Activated CD4-positive, alpha-beta T cell treated with anti-CD3 and anti-CD28 coated beads, Interleukin-2, amount 10 ng/mL, durations not matched to agents 24 days and 14 days (primary cell): ENCODE measurements at regions of chr22 and their contacts with region 1.

Region 1: GRCh38 chr22:31846161-31847115 is 92.6 kb downstream of the DEPDC5 start:
- DNase-seq: peak; percentile 59
- H3K4me3 Mint-ChIP-seq: no peak overlapping the region
- H3K27ac Mint-ChIP-seq: no peak overlapping the region
- H3K4me1 Mint-ChIP-seq: peaks cover 7% of the 10 kb centered on the region
- H3K27me3 Mint-ChIP-seq: no peaks in the 10 kb centered on the region

Region 2: DNA sequence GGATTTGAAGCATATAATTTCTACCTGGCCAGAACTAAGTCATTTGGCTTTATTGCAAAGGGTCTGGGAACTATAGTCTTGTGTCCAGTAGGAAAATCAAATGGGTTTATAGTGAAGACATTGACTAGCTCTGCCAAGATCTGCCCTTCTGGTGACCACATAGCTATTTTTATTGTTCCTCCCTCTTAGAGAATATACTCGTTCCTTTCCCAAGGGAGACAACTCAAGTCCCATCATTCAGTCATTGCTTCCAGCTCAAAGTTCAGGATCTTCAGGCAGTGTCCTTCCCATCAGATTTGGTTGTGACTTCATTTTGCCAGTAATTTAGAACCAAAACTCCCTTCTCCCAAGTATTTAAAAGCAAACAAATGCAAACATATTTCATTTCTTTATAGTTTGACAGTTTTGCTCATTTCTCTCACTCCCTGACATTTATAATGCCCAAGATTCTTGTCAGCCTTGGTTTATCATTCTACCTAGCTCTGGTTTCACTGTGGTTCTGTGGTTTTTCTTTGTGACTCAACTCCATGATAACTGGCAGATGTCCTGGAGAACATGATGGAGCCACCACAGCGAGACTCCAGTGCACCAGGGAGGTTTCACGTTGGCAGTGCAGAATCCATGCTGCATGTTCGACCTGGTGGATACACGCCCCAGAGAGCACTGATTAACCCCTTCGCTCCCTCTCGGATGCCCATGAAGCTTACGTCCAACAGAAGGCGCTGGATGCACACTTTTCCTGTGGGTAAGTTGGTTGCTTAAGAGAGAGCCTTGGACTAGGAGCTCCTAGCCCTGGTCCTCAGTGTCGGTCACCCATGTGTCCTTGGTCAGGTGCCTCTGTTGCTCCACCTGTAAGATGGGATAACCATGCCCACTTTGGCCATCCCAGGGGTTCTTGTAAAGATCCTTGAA is 27.7 kb before region 1 on chr22:
- intact Hi-C with region 1: loop called (anchors 2 kb)
- DNase-seq: no peak
- H3K4me3 Mint-ChIP-seq: no peak overlapping the region
- H3K27ac Mint-ChIP-seq: peak overlapping the region; percentile 21
- H3K4me1 Mint-ChIP-seq: peaks cover 11% of the 10 kb centered on the region
- H3K27me3 Mint-ChIP-seq: no peaks in the 10 kb centered on the region

Region 3: GRCh38 chr22:31857247-31857646 is 10.8 kb after region 1 on chr22:
- intact Hi-C with region 1: no loop called
- DNase-seq: no peak
- H3K4me3 Mint-ChIP-seq: no peak overlapping the region
- H3K27ac Mint-ChIP-seq: no peak overlapping the region
- H3K4me1 Mint-ChIP-seq: peaks cover 5% of the 10 kb centered on the region
- H3K27me3 Mint-ChIP-seq: no peaks in the 10 kb centered on the region

Region 4: GRCh38 chr22:31952459-31952858 is 106.0 kb after region 1 on chr22:
- intact Hi-C with region 1: no loop called
- DNase-seq: no peak
- H3K4me3 Mint-ChIP-seq: no peak overlapping the region
- H3K27ac Mint-ChIP-seq: peak overlapping the region; percentile 84
- H3K4me1 Mint-ChIP-seq: peaks cover 63% of the 10 kb centered on the region
- H3K27me3 Mint-ChIP-seq: no peaks in the 10 kb centered on the region